ENCODE measurements at regions of chr4 and their contacts with region 1.

Region 1: DNA sequence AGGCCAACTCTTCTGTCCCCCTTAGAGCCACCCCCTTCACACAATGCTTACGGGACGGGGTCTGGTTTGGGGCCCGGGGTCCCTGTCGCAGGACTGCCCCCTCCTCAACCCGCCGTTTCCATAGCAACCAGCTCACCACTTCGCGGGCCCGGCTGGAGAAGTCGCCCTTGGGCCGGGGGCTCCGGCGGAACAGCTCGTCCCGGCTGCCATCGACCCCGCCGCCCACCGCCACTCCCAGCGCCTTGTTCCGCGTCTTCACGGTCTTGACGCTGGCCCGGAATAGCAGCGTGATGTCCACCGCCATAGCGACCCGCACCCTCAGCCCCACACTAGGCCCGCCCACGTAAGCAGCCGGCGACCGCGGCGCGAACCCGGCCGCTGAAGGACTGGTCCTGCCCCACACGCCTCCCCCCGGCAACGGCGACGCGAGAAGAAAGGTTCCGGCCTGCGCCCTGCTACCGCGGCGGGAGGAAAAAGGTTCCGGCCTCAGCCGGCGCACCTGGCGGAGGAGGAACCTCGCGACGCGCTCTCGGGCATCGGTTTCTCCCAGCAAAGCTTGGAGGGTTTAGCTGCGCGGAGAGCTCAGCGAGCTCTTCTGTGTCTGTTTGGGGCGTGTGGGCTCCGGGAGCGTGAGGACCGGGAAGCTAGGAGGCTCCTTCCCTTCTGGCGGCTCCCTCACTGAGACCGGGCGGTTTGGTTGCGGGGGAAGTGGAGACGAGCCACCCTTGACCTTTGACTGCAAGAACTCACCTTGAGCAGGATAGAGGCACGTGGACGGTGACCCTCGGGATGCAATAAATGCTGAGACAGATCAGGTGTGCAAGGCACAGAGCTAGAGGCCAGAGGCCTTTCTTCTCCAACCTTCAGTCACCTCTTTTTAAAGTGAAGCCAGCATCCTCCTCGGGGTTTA is at the start of gene STX18:
- DNase-seq: peak; percentile 85
- H3K4me3 Mint-ChIP-seq: peak within 1 kb of the TSS; percentile 98
- H3K27ac Mint-ChIP-seq: peak within 1 kb of the TSS; percentile 98
- H3K4me1 Mint-ChIP-seq: peaks cover 46% of the 10 kb centered on the region
- H3K27me3 Mint-ChIP-seq: no peaks in the 10 kb centered on the region
- total RNA-seq, gene STX18: 34.6 and 35.4 TPM in 2 replicates

Region 2: DNA sequence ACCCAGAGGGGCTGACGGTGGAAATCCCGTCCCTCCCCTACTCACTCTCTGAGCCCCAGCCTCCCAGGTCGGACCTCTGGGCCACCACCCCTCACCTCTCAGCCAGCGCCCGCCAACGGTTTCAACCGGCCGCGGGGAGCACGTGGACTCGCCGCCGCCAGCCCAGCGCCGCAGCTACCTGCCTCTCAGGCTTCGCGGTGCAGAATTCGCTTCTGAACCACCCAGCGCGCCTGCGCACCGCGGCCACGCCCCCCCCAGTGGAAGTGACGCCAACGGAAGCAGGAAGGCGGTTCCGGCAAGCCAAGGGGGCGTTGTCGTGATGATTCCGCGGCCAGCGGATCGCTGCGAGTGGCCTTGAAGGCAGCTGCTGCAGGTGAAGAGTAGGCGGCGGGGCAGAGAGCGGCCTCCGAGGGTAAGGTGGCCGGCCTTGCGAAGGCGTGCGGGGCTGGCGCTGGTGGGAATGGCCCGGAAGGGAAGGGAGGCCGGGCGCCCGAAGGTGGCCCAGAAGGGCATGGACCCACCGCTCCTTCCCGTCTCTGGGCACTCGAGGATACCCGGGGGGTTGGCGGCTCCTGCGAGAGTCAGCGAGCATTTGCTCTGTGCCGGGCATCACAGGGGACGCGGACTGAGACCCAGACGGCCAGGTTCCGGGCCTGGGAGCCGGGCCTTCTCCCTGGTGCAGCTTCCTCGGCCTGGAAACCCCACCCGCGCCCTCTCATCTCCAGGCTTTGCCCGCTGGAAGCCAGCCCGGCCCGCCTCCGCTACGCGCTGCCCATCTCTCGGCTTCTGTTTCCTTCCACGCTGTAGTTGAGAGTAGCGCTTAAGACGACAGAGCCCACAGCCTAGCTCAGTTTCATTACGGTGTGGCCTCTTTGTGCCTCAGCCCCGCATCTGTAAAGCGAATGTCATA is 251.7 kb before region 1 on chr4 and contains the starts of genes LYAR and ZBTB49:
- intact Hi-C with region 1: loop called (anchors 2 kb)
- DNase-seq: peak; percentile 96
- H3K4me3 Mint-ChIP-seq: peak within 1 kb of the TSS; percentile 97
- H3K27ac Mint-ChIP-seq: peak within 1 kb of the TSS; percentile 90
- H3K4me1 Mint-ChIP-seq: peaks cover 31% of the 10 kb centered on the region
- H3K27me3 Mint-ChIP-seq: no peaks in the 10 kb centered on the region
- total RNA-seq, gene LYAR: 86.8 and 88.3 TPM in 2 replicates
- total RNA-seq, gene ZBTB49: 7.4 and 8.5 TPM in 2 replicates

Region 3: GRCh38 chr4:4502694-4503311 is 39.1 kb before region 1 on chr4:
- intact Hi-C with region 1: loop called (anchors 2 kb)
- DNase-seq: no peak
- H3K4me3 Mint-ChIP-seq: peak overlapping the region; percentile 68
- H3K27ac Mint-ChIP-seq: peak overlapping the region; percentile 15
- H3K4me1 Mint-ChIP-seq: peaks cover 10% of the 10 kb centered on the region
- H3K27me3 Mint-ChIP-seq: no peaks in the 10 kb centered on the region

Region 4: DNA sequence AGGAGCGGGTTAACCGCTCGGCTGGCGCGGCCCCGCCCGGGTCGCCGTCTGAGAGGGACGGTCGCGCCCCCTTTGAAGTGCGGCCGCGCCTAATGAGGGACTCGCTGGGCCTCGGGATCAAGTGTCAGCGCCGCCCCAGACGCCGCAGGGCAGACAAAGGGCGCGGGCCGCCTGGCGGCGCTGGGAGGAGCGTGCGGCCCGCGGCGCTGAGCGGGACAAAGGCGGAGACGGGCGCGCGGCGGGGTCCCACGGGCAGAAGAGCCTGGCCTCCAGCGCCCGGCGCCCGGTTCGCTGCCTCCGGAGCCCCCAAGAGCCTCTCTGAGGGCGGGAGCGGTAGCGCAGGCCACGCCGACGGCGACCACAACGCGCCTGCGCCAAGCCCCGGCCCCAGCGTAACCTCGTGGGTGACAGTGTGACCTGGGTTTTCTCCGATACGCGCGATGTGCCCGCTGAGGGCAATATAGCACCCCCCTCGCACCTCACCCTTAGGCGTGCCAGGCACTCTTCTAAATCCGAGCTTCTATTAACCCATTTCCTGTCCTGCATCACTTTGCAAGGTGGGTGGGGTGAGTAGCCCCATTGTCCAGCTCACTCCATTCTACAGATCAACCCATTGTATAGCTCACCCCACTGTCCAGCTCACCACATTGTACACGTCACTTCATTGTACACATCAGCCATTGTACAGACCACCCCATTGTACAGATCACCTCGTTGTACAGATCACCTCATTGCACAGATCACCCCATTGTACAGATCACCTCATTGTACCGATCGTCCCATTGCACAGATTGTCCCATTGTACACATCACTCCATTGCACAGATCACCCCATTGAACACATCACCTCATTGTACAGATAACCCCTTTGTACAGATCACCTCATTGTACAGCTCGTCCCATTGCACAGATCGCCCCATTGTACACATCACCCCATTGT is 33.6 kb after region 1 on chr4:
- intact Hi-C with region 1: loop called (anchors 1 kb)
- DNase-seq: peak; percentile 10
- H3K4me3 Mint-ChIP-seq: peak overlapping the region; percentile 69
- H3K27ac Mint-ChIP-seq: no peak overlapping the region
- H3K4me1 Mint-ChIP-seq: peaks cover 6% of the 10 kb centered on the region
- H3K27me3 Mint-ChIP-seq: peaks cover 7% of the 10 kb centered on the region

Measured in activated T-helper 1 cell treated with anti-CD3 and anti-CD28 coated beads, Interleukin-12 subunit alpha, Interleukin-12 subunit beta, Interleukin-2, Interleukin-4 antibody, amounts not matched to agents 30 ng/mL and 10 ng/mL and 1 ng/mL, durations not matched to agents 14 hours and 24 hours and 36 hours (primary cell).